Calu3 (cell line): ENCODE measurements at regions of chr3 and their contacts with region 1.

Region 1: GRCh38 chr3:186746008-186746407 is 28.8 kb downstream of the KNG1 start:
- DNase-seq: peak; percentile 92
- H3K4me3 Mint-ChIP-seq: peak overlapping the region; percentile 16
- H3K27ac Mint-ChIP-seq: peak overlapping the region; percentile 94
- H3K4me1 Mint-ChIP-seq: peaks cover 68% of the 10 kb centered on the region
- H3K27me3 Mint-ChIP-seq: no peaks in the 10 kb centered on the region
- CTCF ChIP-seq: no peak

Region 2: DNA sequence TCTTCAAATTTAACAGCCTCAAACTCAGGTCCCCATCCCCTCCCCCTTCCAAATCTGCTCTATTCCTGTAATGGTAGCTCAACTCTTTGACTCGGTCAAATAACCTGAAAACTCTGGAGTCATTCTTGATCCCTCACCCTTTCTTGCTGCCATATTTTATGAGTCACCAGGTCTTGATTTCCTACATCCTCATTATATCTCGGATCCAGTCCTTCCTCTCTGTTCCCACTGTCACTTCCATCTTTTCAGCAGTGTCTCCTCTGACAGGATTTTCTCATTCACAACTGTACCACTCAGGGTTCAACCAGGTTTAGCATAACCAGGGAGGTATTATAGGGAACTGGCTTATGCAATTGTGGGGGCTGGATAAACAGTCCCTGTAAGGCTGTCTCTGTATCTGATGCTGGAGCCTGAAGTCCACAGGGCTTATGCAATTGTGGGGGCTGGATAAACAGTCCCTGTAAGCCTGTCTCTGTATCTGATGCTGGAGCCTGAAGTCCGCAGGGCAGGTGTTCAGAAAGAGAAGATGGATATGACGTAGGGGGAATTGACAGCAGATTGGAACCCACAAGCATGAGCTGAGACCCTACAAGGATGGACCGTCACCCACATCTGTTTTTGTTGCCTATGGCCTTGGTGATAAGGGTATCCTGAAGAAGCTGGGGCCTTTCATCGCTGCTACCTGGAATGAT is 114.9 kb before region 1 on chr3:
- CTCF ChIA-PET with region 1: interaction called, 3 read pairs
- intact Hi-C with region 1: loop called (anchors 5 kb)
- DNase-seq: no peak
- H3K4me3 Mint-ChIP-seq: no peak overlapping the region
- H3K27ac Mint-ChIP-seq: no peak overlapping the region
- H3K4me1 Mint-ChIP-seq: peaks cover 22% of the 10 kb centered on the region
- H3K27me3 Mint-ChIP-seq: no peaks in the 10 kb centered on the region
- CTCF ChIP-seq: no peak

Region 3: GRCh38 chr3:186653080-186653707 is 92.8 kb before region 1 on chr3:
- CTCF ChIA-PET with region 1: no interaction called
- intact Hi-C with region 1: no loop called
- DNase-seq: no peak
- H3K4me3 Mint-ChIP-seq: no peak overlapping the region
- H3K27ac Mint-ChIP-seq: no peak overlapping the region
- H3K4me1 Mint-ChIP-seq: no peaks in the 10 kb centered on the region
- H3K27me3 Mint-ChIP-seq: peaks cover 7% of the 10 kb centered on the region
- CTCF ChIP-seq: no peak

Region 4: DNA sequence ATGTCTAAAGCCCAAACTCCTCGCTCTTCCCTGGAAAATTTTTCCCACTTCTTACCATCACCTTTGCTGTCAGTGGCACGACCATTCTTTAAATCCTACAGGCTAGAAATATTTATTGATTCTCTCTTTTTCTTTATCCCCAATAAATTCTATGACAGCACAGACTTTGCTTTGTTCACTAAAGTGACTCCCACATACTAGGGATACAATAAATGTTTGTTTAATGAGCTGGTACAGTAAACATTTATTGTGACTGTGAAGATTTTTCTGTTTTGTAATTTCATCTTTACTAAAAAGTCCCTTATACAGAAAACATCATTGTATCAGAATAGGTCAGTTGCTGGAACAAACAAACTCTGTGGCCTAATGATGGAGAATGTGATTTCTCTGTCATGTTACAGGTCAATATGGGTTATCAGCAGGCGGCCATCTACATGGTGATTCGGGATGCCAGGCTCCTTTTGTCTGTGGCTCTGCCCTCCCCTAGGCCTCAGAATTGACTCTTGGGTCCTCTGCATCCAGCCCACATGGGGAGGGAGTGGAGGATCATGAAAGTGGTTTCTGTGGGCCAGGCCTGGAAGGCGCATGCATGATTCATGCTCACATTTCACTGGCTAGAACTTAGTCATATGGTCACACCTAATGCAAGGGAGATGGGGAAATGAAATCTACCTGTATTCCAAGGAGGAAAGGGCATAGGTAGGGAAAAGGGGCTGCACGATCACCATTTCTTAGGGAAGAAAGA is 51.5 kb before region 1 on chr3:
- CTCF ChIA-PET with region 1: interaction called, 3 read pairs
- intact Hi-C with region 1: loop called (anchors 10 kb)
- DNase-seq: no peak
- H3K4me3 Mint-ChIP-seq: peak overlapping the region; percentile 11
- H3K27ac Mint-ChIP-seq: no peak overlapping the region
- H3K4me1 Mint-ChIP-seq: no peaks in the 10 kb centered on the region
- H3K27me3 Mint-ChIP-seq: no peaks in the 10 kb centered on the region
- CTCF ChIP-seq: no peak